ENCODE measurements at regions of chr5 and their contacts with region 1.

Region 1: GRCh38 chr5:170338933-170339779 is 41.6 kb upstream of the LCP2 start:
- DNase-seq: peak; percentile 79
- ATAC-seq: peak; percentile 70
- H3K4me3 Mint-ChIP-seq: no peak overlapping the region
- H3K27ac Mint-ChIP-seq: peak overlapping the region; percentile 75
- H3K4me1 Mint-ChIP-seq: peaks cover 39% of the 10 kb centered on the region
- H3K27me3 Mint-ChIP-seq: no peaks in the 10 kb centered on the region
- CTCF ChIP-seq: peak; percentile 95

Region 2: GRCh38 chr5:170262061-170263045 is 76.8 kb before region 1 on chr5:
- CTCF ChIA-PET with region 1: interaction called, 132 read pairs
- POLR2A ChIA-PET with region 1: interaction called, 82 read pairs
- intact Hi-C with region 1: no loop called
- DNase-seq: peak; percentile 60
- ATAC-seq: peak; percentile 25
- H3K4me3 Mint-ChIP-seq: peak overlapping the region; percentile 47
- H3K27ac Mint-ChIP-seq: peak overlapping the region; percentile 96
- H3K4me1 Mint-ChIP-seq: peaks cover 91% of the 10 kb centered on the region
- H3K27me3 Mint-ChIP-seq: no peaks in the 10 kb centered on the region
- CTCF ChIP-seq: no peak

Region 3: GRCh38 chr5:170287532-170287931 is 51.6 kb before region 1 on chr5:
- CTCF ChIA-PET with region 1: interaction called, 204 read pairs
- POLR2A ChIA-PET with region 1: interaction called, 186 read pairs
- intact Hi-C with region 1: no loop called
- DNase-seq: peak; percentile 50
- ATAC-seq: peak; percentile 23
- H3K4me3 Mint-ChIP-seq: peak overlapping the region; percentile 47
- H3K27ac Mint-ChIP-seq: peak overlapping the region; percentile 96
- H3K4me1 Mint-ChIP-seq: peaks cover 100% of the 10 kb centered on the region
- H3K27me3 Mint-ChIP-seq: no peaks in the 10 kb centered on the region
- CTCF ChIP-seq: no peak

Region 4: DNA sequence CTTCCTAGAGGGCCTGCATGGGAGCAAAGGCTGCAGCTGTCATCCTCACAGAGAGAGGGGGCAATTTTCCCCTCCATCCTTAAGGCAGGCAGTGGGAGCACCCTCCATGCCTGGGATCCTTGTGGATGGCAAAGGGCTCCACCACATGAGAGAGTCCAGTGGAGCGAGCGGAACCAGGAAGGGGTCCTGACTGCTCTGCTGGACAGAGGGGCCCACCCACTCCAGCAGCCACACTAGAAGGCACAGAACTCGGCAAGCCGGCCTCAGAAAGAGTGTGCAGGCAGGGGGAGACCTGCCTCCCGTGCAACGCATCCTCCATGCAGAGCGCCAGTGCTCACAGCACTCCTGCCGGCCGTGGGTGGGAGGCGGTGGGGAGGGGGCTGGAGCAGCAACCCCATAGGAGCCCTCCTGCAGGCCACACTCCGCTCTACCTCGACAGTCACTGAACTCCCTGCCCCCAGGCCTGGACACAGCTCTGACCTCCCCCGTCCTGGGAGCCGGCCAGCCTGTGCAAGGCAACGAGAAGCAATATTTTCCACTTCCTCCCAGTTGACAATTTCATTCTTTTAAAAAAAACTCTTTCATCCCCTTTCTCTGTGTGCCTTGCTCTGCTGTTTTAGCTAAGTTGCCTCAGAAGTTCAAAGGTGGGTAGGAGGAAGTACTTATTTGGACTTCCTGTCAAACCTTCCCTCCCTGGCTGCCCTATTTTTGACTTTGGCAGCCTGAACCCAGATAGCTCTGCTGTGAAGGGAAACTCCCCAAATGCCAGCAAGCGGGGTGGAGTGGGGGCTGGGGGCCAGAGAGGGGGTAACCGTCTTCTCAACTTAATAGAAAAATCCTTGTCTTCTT is 36.3 kb before region 1 on chr5:
- CTCF ChIA-PET with region 1: interaction called, 204 read pairs
- POLR2A ChIA-PET with region 1: interaction called, 186 read pairs
- intact Hi-C with region 1: no loop called
- DNase-seq: peak; percentile 71
- ATAC-seq: peak; percentile 87
- H3K4me3 Mint-ChIP-seq: peak overlapping the region; percentile 80
- H3K27ac Mint-ChIP-seq: peak overlapping the region; percentile 98
- H3K4me1 Mint-ChIP-seq: peaks cover 86% of the 10 kb centered on the region
- H3K27me3 Mint-ChIP-seq: no peaks in the 10 kb centered on the region
- CTCF ChIP-seq: peak; percentile 21

Region 5: DNA sequence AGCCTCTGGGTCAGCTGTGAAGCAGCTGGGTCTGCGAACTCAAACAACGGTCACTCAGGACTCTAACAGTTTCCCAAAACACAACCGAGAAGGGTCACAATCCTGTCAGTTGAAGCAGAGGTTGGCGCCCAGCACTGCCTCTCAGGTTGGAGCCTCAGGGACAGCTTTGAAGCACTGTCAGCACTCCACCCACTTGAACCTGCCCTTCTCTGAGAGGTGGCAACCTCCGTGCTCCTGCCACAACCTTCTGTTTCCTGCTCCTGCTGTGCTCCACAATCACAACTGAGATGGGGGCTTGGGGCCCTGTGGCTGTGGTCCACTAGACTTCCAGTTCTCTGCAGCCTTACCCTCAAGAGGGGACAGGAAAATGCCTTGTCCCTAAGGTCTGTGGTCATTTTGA is 19.9 kb before region 1 on chr5:
- CTCF ChIA-PET with region 1: interaction called, 14 read pairs
- POLR2A ChIA-PET with region 1: interaction called, 86 read pairs
- intact Hi-C with region 1: no loop called
- DNase-seq: peak; percentile 44
- ATAC-seq: peak; percentile 77
- H3K4me3 Mint-ChIP-seq: no peak overlapping the region
- H3K27ac Mint-ChIP-seq: peak overlapping the region; percentile 68
- H3K4me1 Mint-ChIP-seq: peaks cover 29% of the 10 kb centered on the region
- H3K27me3 Mint-ChIP-seq: no peaks in the 10 kb centered on the region
- CTCF ChIP-seq: no peak